Activated CD4-positive, alpha-beta T cell treated with anti-CD3 and anti-CD28 coated beads, Interleukin-2, amount 10 ng/mL, durations not matched to agents 24 days and 14 days (primary cell): ENCODE measurements at regions of chr3 and their contacts with region 1.

Region 1: DNA sequence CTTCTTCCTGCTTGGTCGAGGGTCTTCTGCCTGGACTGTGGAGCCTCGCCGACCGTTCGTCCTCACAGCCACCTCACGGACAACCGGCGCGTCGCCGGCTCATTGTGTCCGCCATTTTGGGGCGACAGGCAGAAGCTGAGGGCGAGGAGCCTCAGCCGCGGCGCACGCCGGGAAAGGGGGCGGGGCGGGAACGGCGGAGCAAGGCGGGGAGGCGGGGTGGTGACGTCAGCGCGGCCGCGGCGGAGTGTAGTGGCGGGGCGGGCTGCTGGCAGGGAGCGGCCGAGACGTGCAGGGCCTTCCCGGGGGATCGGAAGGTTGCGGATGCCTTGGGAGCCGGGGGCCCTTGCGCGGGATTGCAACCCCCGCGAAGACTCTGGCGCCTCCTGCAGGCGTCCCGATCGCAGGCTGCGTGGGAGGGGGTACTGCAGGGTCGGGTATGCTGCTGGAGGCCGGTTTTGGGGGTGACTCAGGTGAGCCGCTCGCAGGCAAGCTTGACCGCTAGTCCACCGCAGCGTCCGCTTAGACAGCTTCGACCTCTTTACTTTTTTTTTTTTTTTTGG is at the start of gene WDR82:
- DNase-seq: peak; percentile 99
- H3K4me3 Mint-ChIP-seq: peak within 1 kb of the TSS; percentile 96
- H3K27ac Mint-ChIP-seq: peak within 1 kb of the TSS; percentile 96
- H3K4me1 Mint-ChIP-seq: peaks cover 64% of the 10 kb centered on the region
- H3K27me3 Mint-ChIP-seq: no peaks in the 10 kb centered on the region
- total RNA-seq, gene WDR82: 104 and 106 TPM in 2 replicates

Region 2: GRCh38 chr3:51982782-51983577 is 295.6 kb before region 1 on chr3 and contains the start of gene ACY1:
- intact Hi-C with region 1: loop called (anchors 10 kb)
- DNase-seq: peak; percentile 95
- H3K4me3 Mint-ChIP-seq: peak within 1 kb of the TSS; percentile 96
- H3K27ac Mint-ChIP-seq: peak within 1 kb of the TSS; percentile 96
- H3K4me1 Mint-ChIP-seq: peaks cover 20% of the 10 kb centered on the region
- H3K27me3 Mint-ChIP-seq: no peaks in the 10 kb centered on the region
- total RNA-seq, gene ACY1: 57.9 and 58.7 TPM in 2 replicates

Region 3: GRCh38 chr3:52238761-52239701 is 39.6 kb before region 1 on chr3 and contains the start of gene TWF2:
- intact Hi-C with region 1: loop called (anchors 1 kb)
- DNase-seq: peak; percentile 97
- H3K4me3 Mint-ChIP-seq: peak within 1 kb of the TSS; percentile 93
- H3K27ac Mint-ChIP-seq: peak within 1 kb of the TSS; percentile 99
- H3K4me1 Mint-ChIP-seq: peaks cover 62% of the 10 kb centered on the region
- H3K27me3 Mint-ChIP-seq: no peaks in the 10 kb centered on the region
- total RNA-seq, gene TWF2: 80.3 and 87.0 TPM in 2 replicates

Region 4: DNA sequence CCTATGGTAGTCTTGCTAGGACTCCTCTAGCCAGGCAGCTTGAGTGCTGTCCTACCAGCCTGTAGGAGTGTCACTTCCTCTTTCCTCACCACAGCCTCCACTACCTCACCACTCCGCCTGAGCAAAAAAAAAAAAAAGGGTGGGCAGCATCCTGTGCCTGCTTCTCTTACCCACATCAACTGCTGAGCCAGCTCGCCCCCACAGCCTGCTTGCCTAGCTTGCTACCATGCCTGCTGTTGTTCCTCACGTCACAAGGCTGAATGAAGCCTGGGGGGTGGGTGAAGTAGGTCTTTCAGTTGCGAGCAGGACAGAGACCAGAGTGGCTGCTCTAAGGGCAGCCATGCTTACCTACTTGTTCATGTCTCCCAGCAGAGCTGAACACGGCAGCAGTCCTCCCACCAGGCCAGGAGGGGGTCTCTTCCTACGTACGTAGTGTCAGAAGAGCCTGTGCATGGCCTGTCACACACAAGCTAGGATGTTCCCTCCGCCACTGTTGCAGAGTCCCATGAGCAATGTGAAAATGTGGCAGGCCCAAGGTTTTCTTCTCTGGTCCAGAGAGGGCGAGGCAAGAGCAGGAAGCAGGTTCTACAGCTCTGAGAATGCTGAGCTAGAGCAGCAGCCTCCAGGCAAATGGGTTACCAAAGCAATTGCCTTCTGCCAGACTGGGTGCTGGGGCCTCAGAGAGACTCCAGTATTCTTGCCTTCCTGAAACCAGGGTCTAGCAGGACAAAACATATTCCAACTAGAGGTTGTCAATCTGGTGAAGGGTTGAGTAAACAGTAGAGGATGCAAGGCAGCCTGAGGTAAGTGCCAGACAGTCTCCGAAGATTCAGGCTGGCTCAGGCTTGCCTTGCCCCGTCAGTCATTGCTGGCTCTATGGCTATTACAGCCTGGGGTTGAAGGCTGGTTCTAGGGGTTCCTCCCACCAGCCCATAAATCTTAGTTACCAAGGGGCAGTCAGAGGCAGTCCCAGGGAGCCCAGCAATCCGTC is 25.0 kb before region 1 on chr3:
- intact Hi-C with region 1: loop called (anchors 1 kb)
- DNase-seq: peak; percentile 95
- H3K4me3 Mint-ChIP-seq: peak overlapping the region; percentile 88
- H3K27ac Mint-ChIP-seq: peak overlapping the region; percentile 99
- H3K4me1 Mint-ChIP-seq: peaks cover 77% of the 10 kb centered on the region
- H3K27me3 Mint-ChIP-seq: peaks cover 2% of the 10 kb centered on the region

Region 5: GRCh38 chr3:52291508-52292181 is 13.1 kb after region 1 on chr3:
- intact Hi-C with region 1: loop called (anchors 1 kb)
- DNase-seq: peak; percentile 82
- H3K4me3 Mint-ChIP-seq: no peak overlapping the region
- H3K27ac Mint-ChIP-seq: no peak overlapping the region
- H3K4me1 Mint-ChIP-seq: peaks cover 20% of the 10 kb centered on the region
- H3K27me3 Mint-ChIP-seq: no peaks in the 10 kb centered on the region

Region 6: GRCh38 chr3:52318186-52318816 is 39.7 kb after region 1 on chr3:
- intact Hi-C with region 1: no loop called
- DNase-seq: no peak
- H3K4me3 Mint-ChIP-seq: no peak overlapping the region
- H3K27ac Mint-ChIP-seq: peak overlapping the region; percentile 62
- H3K4me1 Mint-ChIP-seq: peaks cover 21% of the 10 kb centered on the region
- H3K27me3 Mint-ChIP-seq: no peaks in the 10 kb centered on the region

Region 7: GRCh38 chr3:52339612-52340011 is 61.0 kb after region 1 on chr3:
- intact Hi-C with region 1: loop called (anchors 10 kb)
- DNase-seq: peak; percentile 87
- H3K4me3 Mint-ChIP-seq: no peak overlapping the region
- H3K27ac Mint-ChIP-seq: no peak overlapping the region
- H3K4me1 Mint-ChIP-seq: peaks cover 9% of the 10 kb centered on the region
- H3K27me3 Mint-ChIP-seq: no peaks in the 10 kb centered on the region